IMR-90 (cell line): ENCODE measurements at regions of chr2 and their contacts with region 1.

Region 1: DNA sequence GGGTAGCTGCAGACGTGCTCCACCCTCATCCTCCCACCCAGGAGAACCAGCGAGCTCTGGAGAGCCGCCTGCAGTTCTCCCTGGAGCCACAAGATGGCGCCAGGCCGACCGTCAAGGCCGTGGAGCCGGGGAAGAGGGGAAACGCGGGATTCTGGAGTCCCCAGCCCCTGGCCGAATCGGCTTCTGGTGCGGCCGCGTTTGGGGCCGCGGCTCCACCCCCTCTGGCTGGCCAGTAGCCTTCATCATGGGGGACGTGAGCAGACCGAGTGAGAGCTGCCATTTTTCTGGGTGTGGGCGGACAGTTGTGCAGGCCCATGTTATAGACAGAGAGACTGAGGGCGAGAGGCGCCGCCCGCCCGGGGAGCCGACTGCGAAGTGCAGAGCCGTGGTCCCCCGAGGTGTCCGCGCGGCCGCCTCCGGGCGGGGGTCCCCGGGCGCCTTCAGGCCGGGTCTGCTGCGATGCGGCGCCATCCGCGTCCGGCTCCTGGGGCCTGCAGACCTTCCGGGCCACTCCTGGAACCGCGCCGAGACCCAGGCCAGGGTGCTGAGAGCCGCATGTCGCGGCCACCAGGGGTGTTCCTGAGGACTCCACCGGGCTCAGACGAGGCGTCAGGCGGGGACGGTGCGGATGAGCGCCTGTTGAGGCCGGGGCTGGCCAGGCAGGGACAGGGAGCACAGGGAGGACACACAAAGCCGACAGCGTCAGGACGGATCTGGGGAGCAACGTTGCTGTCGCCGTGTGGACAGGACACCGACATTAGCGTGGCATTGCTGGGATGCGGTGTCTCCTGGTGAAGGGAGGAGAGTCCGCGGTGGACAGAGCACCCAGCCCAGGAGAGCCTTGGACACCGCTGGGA is 418.2 kb upstream of the HS6ST1 start:
- DNase-seq: peak; percentile 49
- ATAC-seq: peak; percentile 84
- H3K4me3 ChIP-seq: no peak overlapping the region; the same call in 1 of the 2 replicates
- H3K27ac ChIP-seq: no peak overlapping the region
- H3K4me1 ChIP-seq: peaks cover 11% of the 10 kb centered on the region; the same call in 1 of the 2 replicates
- H3K27me3 ChIP-seq: peaks cover 10% of the 10 kb centered on the region; the same call in 1 of the 2 replicates
- CTCF ChIP-seq: peak; percentile 87
- POLR2A ChIP-seq: no peak
- RAD21 ChIP-seq: peak; percentile 64

Region 2: DNA sequence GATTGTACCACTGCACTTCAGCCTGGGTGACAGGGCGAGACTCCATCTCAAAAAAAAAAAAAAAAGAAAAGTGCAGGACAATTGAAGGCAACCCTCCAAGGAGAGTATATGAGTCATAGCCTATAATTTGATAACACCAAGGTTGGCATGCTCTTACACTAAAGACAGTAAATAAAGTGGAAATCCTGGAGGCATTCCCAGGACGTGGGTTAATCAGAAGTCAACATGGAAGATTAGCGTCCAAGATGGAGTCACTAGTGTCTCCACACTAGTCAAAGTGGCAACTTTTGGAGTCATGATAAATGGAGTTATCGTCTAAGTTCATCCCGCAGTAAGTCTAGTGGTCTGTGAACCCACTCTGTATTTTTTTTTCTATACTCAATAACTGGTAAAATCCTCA is 667.1 kb before region 1 on chr2:
- CTCF ChIA-PET with region 1: no interaction called
- POLR2A ChIA-PET with region 1: no interaction called
- dilution Hi-C with region 1: no loop called
- in situ Hi-C with region 1: loop called (anchors 25 kb)
- intact Hi-C with region 1: no loop called
- DNase-seq: peak; percentile 59
- ATAC-seq: peak; percentile 42
- H3K4me3 ChIP-seq: no peak overlapping the region
- H3K27ac ChIP-seq: no peak overlapping the region
- H3K4me1 ChIP-seq: no peaks in the 10 kb centered on the region
- H3K27me3 ChIP-seq: 0 out of 2 replicates have a peak, but pooled peaks cover 2% of the 10 kb centered on the region
- CTCF ChIP-seq: no peak
- POLR2A ChIP-seq: no peak
- RAD21 ChIP-seq: no peak

Region 3: DNA sequence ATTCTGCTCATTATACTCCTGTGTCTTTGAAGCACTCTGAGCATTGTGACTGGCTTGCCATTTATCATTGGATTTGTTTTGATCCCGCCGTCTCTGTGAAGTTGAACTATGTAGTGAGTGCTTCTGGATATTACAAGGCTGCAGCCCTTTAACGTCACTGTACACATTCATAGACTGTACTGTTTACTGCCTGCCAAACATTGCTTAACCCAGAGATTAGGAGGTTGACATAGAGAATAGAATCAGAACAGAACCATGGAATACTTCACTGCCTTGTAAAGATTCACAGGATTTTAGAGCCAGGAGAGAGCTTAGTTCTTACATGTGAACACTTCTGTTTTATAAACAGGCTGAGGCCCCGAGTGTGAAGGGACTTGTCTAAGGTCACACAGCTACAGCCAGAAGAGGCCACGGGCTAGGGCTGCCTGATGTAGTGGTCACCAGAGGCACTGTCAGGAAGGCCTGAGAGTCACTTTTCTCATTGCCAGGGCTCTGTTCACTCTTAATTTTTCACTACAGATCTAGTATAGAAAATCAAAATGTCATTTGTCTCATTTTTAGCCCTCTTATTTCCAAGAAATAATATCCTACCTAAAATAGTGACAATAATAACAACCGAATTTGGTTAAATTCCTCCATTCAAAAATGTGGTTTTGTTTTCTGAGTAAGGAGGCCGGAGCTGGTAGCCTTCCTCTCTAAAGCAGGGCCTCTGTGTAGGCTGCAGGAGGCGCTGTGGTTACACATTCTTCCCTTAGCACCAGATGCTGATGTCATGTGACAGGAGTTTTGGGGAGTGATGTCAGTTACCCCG is 558.1 kb before region 1 on chr2:
- CTCF ChIA-PET with region 1: interaction called, 3 read pairs
- POLR2A ChIA-PET with region 1: no interaction called
- dilution Hi-C with region 1: no loop called
- in situ Hi-C with region 1: no loop called
- intact Hi-C with region 1: loop called (anchors 5 kb)
- DNase-seq: peak; percentile 89
- ATAC-seq: peak; percentile 79
- H3K4me3 ChIP-seq: no peak overlapping the region
- H3K27ac ChIP-seq: peak overlapping the region; percentile 88; the same call in 1 of the 2 replicates
- H3K4me1 ChIP-seq: peaks cover 13% of the 10 kb centered on the region
- H3K27me3 ChIP-seq: no peaks in the 10 kb centered on the region
- CTCF ChIP-seq: peak; percentile 95
- POLR2A ChIP-seq: no peak
- RAD21 ChIP-seq: peak; percentile 89

Region 4: DNA sequence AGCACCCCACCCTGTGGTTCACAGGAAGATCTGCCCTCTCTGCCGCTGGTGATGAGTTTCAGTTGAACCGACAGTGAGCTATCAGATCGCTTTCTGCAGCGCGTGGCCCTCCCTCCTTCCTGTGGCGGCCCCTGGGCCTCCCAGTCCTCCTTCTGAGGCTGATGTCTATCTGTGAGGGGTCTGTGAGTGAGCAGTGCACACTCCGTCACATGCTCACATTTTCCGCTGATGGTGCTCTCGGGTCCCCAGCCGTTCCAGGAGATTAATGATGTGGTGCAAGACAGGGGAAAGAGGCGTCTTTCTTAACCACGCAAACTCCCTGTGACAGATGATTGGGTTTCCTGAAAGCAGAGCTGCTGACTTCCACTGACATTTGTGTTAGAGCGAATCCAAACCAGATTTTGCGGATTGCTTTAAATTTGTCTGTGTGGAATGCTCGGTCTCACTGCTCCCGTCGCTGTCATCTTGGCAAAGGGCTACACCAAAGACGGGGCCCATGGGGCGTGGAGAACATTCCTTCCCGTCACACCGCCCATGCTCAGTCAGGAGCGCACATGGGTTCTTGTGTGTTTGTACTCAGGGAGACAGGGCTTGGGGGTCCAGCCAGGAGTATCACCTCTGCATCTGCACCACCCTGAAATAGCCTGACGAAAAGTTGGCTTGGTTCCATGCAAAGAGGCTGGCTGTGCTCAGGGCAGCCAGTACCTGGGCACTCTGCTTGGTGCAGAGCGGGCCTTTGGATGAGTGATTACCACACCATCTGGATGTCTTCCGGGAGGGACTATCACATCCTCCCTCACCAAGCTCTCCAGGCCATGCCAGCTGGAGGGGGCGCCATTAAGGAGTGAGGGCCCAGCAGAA is 263.5 kb before region 1 on chr2:
- CTCF ChIA-PET with region 1: no interaction called
- POLR2A ChIA-PET with region 1: no interaction called
- dilution Hi-C with region 1: no loop called
- in situ Hi-C with region 1: no loop called
- intact Hi-C with region 1: loop called (anchors 10 kb)
- DNase-seq: peak; percentile 62
- ATAC-seq: peak; percentile 76
- H3K4me3 ChIP-seq: no peak overlapping the region; the same call in 1 of the 2 replicates
- H3K27ac ChIP-seq: peak overlapping the region; percentile 38; the same call in 1 of the 2 replicates
- H3K4me1 ChIP-seq: peaks cover 6% of the 10 kb centered on the region; the same call in 1 of the 2 replicates
- H3K27me3 ChIP-seq: peaks cover 4% of the 10 kb centered on the region
- CTCF ChIP-seq: no peak
- POLR2A ChIP-seq: no peak
- RAD21 ChIP-seq: no peak

Region 5: DNA sequence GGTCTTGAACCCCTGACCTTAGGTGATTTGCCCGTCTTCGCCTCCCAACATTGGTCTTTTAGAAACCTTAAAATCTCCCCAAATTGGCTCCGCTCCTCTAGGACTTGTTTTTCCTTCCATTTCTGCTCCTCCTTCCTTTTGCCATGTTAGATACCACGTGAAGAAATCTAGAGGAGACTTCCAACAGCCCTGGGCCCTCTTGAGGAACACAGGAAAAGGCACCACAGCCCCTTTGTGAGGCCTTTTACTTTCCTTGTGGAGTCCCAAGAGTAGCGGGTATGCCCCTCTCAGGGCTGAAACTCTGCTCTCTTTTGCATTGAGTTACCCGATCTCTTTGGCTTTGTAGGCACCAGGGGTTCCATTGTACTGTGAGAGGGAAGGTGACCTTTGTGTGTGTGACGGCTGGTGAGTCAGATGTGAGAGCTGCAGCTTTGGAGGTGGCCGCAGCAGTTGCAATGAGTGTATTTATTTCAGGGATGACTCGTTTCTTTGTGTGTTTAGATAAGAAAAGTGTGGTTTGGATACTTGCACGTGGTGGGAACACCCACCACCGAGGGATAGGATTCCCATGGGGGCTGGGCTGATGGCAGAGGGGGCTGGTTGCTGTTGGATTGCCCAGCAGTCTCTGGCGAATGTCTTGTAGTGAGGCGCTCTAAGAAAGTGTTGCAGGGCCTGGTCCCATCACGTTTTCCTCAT is 199.8 kb before region 1 on chr2:
- CTCF ChIA-PET with region 1: no interaction called
- POLR2A ChIA-PET with region 1: no interaction called
- dilution Hi-C with region 1: no loop called
- in situ Hi-C with region 1: no loop called
- intact Hi-C with region 1: loop called (anchors 2 kb)
- DNase-seq: peak; percentile 99
- ATAC-seq: peak; percentile 91
- H3K4me3 ChIP-seq: no peak overlapping the region
- H3K27ac ChIP-seq: peak overlapping the region; percentile 79
- H3K4me1 ChIP-seq: peaks cover 8% of the 10 kb centered on the region
- H3K27me3 ChIP-seq: no peaks in the 10 kb centered on the region
- CTCF ChIP-seq: peak; percentile 17; the same call in 1 of the 2 replicates
- POLR2A ChIP-seq: peak; percentile 72; the same call in 1 of the 2 replicates
- RAD21 ChIP-seq: peak; percentile 37